HCT116 (cell line): ENCODE measurements at regions of chr3 and their contacts with region 1.

Region 1: GRCh38 chr3:45037734-45038455 is 11.8 kb downstream of the CLEC3B start:
- DNase-seq: peak; percentile 90
- ATAC-seq: peak; percentile 91
- H3K4me3 ChIP-seq: peak overlapping the region in 1 of 2 experiments; percentile 49; a peak in 2 of 4 replicates
- H3K27ac ChIP-seq: no peak overlapping the region
- H3K4me1 ChIP-seq: peaks cover 4 to 23% of the 10 kb centered on the region in 2 experiments; a peak in 3 of 4 replicates
- H3K27me3 ChIP-seq: no peaks in the 10 kb centered on the region
- CTCF ChIP-seq: peak; percentile 91 to 99 (median 92)
- POLR2A ChIP-seq: no peak
- RAD21 ChIP-seq: peak; percentile 99

Region 2: GRCh38 chr3:44529927-44530326 is 508.0 kb before region 1 on chr3:
- CTCF ChIA-PET with region 1: interaction called, 4 read pairs
- POLR2A ChIA-PET with region 1: no interaction called
- RAD21 ChIA-PET with region 1: no interaction called
- intact Hi-C with region 1: loop called (anchors 1 kb)
- DNase-seq: peak; percentile 10
- ATAC-seq: peak; percentile 77
- H3K4me3 ChIP-seq: no peak overlapping the region
- H3K27ac ChIP-seq: no peak overlapping the region
- H3K4me1 ChIP-seq: no peaks in the 10 kb centered on the region
- H3K27me3 ChIP-seq: no peaks in the 10 kb centered on the region
- CTCF ChIP-seq: peak; percentile 40 to 60 (median 55); a peak in 5 of 6 replicates
- POLR2A ChIP-seq: no peak
- RAD21 ChIP-seq: peak; percentile 62

Region 3: DNA sequence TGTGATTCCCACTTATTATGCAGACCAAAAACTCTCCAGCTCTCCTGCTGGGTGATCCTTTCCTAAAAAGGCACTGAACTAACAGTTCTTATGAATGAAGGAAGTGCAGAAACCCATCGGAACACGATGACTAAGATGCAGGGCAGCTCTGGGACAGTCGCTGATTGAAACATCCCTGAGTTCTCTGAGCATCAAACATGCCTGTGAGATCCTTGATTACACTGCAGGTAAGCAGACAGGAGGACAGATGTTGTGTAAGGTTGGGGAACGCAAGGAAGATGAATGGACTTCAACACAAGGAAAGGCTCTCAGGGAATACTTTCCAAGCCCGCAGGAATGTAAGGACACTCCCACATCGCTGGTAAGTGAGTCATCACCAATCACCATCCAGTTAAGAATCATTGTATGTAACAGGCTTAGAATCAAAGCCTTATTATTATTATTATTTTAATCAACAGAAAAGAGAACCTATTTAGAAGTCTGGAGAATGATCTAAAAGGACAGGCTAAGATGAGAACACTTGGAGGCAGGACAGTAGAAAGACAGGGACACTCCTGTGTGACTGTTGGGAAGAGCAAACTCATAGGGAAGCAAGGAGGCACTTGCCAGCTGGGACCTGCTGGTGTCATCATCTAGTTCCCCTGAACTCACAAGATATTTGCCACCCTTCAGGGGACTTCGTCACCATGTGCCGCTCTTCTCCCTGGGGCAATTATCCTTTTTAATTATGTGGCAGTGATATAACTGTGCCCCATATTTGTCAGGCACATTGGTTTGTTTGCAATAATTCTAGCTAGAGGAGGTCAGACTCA is 162.1 kb after region 1 on chr3:
- CTCF ChIA-PET with region 1: interaction called, 19 read pairs
- POLR2A ChIA-PET with region 1: no interaction called
- RAD21 ChIA-PET with region 1: no interaction called
- intact Hi-C with region 1: no loop called
- DNase-seq: peak; percentile 95
- ATAC-seq: peak; percentile 88
- H3K4me3 ChIP-seq: peak overlapping the region; percentile 4 to 40; a peak in 2 of 4 replicates
- H3K27ac ChIP-seq: peak overlapping the region; percentile 78
- H3K4me1 ChIP-seq: peaks cover 22 to 33% of the 10 kb centered on the region in 2 experiments
- H3K27me3 ChIP-seq: no peaks in the 10 kb centered on the region
- CTCF ChIP-seq: no peak
- POLR2A ChIP-seq: no peak
- RAD21 ChIP-seq: no peak; the same call in 1 of the 2 replicates

Region 4: GRCh38 chr3:45499529-45499928 is 461.6 kb after region 1 on chr3:
- CTCF ChIA-PET with region 1: interaction called, 19 read pairs
- POLR2A ChIA-PET with region 1: no interaction called
- RAD21 ChIA-PET with region 1: interaction called in 1 of 2 experiments, 3 read pairs
- intact Hi-C with region 1: loop called (anchors 1 kb)
- DNase-seq: peak; percentile 19
- ATAC-seq: no peak
- H3K4me3 ChIP-seq: no peak overlapping the region
- H3K27ac ChIP-seq: no peak overlapping the region
- H3K4me1 ChIP-seq: no peaks in the 10 kb centered on the region
- H3K27me3 ChIP-seq: no peaks in the 10 kb centered on the region
- CTCF ChIP-seq: peak in 2 of 3 experiments; percentile 24 to 82; a peak in 3 of 6 replicates
- POLR2A ChIP-seq: no peak
- RAD21 ChIP-seq: peak; percentile 79

Region 5: DNA sequence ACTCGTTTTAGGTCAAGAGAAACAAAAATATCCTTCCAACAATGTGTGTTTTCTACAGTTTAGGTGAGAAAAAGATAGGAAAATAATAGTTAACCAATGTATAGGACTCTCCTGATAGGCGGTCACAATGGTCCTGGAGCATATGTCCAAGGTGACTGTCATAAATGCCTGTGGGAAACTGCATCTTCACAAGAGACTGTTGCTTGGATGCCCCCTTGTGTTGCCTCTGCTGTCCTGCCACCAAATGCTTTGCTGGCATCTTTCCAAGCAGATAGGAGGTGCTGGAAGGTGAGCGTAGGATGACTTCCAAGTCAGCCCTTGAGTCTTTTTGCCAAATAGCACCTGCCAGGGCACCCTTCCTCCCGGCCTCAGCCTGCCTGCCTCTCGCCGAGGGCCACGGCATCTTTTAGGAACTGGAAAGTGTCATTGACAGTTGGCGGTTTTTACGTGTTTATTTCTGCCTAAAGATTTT is 627.2 kb after region 1 on chr3:
- CTCF ChIA-PET with region 1: interaction called, 7 read pairs
- POLR2A ChIA-PET with region 1: interaction called, 4 read pairs
- RAD21 ChIA-PET with region 1: no interaction called
- intact Hi-C with region 1: loop called (anchors 2 kb)
- DNase-seq: peak; percentile 68
- ATAC-seq: peak; percentile 83
- H3K4me3 ChIP-seq: no peak overlapping the region
- H3K27ac ChIP-seq: no peak overlapping the region
- H3K4me1 ChIP-seq: peaks cover 8 to 17% of the 10 kb centered on the region in 2 experiments; a peak in 3 of 4 replicates
- H3K27me3 ChIP-seq: no peaks in the 10 kb centered on the region
- CTCF ChIP-seq: peak; percentile 73 to 92 (median 81)
- POLR2A ChIP-seq: no peak
- RAD21 ChIP-seq: peak; percentile 68

Region 6: GRCh38 chr3:45929042-45929679 is 891.3 kb after region 1 on chr3:
- CTCF ChIA-PET with region 1: interaction called, 5 read pairs
- POLR2A ChIA-PET with region 1: no interaction called
- RAD21 ChIA-PET with region 1: no interaction called
- intact Hi-C with region 1: loop called (anchors 10 kb)
- DNase-seq: peak; percentile 10
- ATAC-seq: peak; percentile 98
- H3K4me3 ChIP-seq: no peak overlapping the region
- H3K27ac ChIP-seq: no peak overlapping the region
- H3K4me1 ChIP-seq: peaks cover under 1 to 5% of the 10 kb centered on the region in 2 experiments; a peak in 3 of 4 replicates
- H3K27me3 ChIP-seq: no peaks in the 10 kb centered on the region
- CTCF ChIP-seq: peak; percentile 69 to 83 (median 83)
- POLR2A ChIP-seq: no peak
- RAD21 ChIP-seq: peak; percentile 85